A673 (cell line): ENCODE measurements at regions of chr1 and their contacts with region 1.

Region 1: DNA sequence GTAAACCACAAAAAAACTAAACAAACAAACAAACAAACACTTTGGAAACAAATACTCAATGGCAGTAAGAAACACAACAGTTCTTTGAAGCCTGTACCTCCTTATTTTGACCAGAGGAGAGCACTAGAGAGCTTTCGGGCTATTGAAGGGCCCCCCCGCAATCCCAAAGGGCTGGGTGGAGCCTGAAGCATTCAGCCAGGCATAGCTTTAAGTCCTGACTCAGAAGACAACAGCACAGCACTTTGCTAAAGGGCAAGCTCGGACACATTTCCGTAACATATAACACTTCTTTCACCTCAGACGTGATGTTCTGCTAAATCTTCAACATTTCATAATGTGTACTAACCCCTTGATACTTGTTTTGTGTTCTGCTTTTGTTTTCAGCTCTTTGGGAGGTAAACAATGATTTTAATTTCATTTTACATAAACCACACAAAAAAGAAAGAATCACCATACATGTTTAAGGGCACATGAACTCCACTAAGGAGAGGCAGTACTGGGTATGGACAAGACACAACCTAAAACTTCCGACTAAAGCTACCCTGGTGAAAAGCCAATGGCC is 9.7 kb upstream of the SHCBP1L start:
- DNase-seq: peak; percentile 92
- H3K4me3 ChIP-seq: peak overlapping the region; percentile 28
- H3K27ac ChIP-seq: no peak overlapping the region
- H3K4me1 ChIP-seq: peaks cover 6% of the 10 kb centered on the region
- H3K27me3 ChIP-seq: no peaks in the 10 kb centered on the region
- CTCF ChIP-seq: peak; percentile 96

Region 2: DNA sequence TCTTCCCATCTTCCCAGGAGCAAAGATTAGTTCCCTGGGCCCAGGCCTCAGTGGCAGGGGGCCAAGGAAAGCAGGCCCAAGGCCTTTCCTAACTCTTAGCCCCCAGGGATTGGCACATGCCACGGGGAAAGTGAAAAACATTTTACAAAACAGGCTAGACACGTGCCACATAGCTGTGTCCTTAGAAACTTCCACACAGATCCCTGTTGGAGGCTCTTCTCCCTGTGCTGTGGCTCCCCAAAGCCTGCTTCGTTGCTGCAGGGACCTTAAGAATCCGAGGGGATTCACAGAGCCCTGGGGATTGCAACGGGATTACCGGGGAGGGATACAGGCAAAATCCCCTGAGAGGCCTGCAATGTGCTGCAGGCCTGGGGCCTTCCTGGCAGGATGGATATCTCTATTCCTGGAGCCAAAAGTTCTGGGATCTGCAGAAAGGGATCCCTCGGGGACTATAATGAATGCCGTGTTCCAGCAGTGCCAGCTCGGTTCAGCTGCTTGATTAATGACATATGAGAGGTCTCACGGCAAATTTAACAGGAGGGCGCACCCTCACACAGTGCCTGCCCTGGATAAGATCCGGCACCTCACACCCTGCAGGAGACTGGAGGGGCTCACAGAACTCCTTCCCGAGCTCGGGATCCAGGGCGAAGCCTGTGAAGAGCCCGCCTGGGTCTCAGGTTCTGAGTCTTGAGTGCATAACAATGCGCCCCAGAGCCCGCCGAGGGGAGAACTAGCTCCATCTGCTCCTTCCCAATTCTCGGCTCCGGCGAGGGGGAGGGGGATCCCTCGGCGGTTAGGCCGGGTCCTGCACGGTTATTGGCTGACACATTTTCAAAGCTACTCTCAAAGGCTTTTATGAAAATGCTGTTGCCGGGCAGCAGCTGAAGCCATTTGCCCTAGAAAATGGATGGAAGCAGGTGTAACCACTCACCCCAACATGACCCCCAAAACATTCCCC is 263.0 kb before region 1 on chr1:
- CTCF ChIA-PET with region 1: no interaction called
- POLR2A ChIA-PET with region 1: no interaction called
- intact Hi-C with region 1: no loop called
- DNase-seq: peak; percentile 43
- H3K4me3 ChIP-seq: no peak overlapping the region
- H3K27ac ChIP-seq: no peak overlapping the region
- H3K4me1 ChIP-seq: peaks cover 10% of the 10 kb centered on the region
- H3K27me3 ChIP-seq: no peaks in the 10 kb centered on the region
- CTCF ChIP-seq: no peak

Region 3: GRCh38 chr1:182839209-182840065 is 123.2 kb before region 1 on chr1 and contains the start of gene DHX9:
- CTCF ChIA-PET with region 1: no interaction called
- POLR2A ChIA-PET with region 1: no interaction called
- intact Hi-C with region 1: no loop called
- DNase-seq: peak; percentile 96
- H3K4me3 ChIP-seq: peak within 1 kb of the TSS; percentile 79
- H3K27ac ChIP-seq: peak within 1 kb of the TSS; percentile 98
- H3K4me1 ChIP-seq: peaks cover 17% of the 10 kb centered on the region
- H3K27me3 ChIP-seq: no peaks in the 10 kb centered on the region
- CTCF ChIP-seq: peak; percentile 32
- total RNA-seq, gene DHX9: 374 and 384 TPM in 2 replicates

Region 4: GRCh38 chr1:183070923-183071618 is 108.4 kb after region 1 on chr1:
- CTCF ChIA-PET with region 1: interaction called, 3 read pairs
- POLR2A ChIA-PET with region 1: no interaction called
- intact Hi-C with region 1: loop called (anchors 5 kb)
- DNase-seq: peak; percentile 97
- H3K4me3 ChIP-seq: no peak overlapping the region
- H3K27ac ChIP-seq: peak overlapping the region; percentile 71
- H3K4me1 ChIP-seq: peaks cover 57% of the 10 kb centered on the region
- H3K27me3 ChIP-seq: no peaks in the 10 kb centered on the region
- CTCF ChIP-seq: no peak

Region 5: DNA sequence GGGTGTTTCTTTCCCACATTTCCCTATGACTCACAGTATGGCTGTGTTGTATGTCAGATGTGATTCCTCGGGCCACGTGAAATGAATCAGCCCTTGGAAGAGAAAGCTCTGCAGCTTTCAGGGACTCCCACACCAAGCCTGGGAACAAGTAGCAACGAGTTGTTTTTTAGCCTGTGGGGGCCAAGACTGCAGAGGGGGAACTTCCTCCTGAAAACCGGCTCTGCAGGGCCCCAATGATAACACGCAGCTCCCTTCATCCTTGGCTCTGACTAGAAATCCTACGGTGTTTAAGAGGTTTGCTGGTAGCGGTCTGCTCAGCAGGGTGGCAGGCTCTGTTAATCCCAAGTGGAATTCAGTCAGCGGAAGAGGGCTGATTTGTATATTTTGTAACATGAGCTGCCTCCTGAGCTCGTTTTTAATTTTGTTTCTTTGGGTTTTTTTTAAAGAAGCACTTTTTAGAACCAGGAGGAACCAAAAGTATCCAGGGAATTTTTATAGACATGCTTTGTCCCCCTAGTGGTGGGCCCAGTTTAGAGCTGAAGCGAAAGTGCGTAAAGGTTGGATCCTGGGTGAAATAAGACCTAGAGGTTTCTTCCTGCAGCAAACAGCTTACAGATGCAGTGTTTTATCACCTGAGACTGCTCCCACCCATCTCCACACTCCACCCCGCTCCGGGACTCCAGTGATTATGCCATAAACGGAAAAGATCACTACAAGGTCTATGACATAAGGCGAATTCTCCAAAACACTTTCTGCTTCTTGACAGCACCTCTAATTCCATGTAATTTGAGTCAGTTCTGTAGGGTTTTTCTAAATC is 272.2 kb after region 1 on chr1:
- CTCF ChIA-PET with region 1: interaction called, 25 read pairs
- POLR2A ChIA-PET with region 1: no interaction called
- intact Hi-C with region 1: loop called (anchors 1 kb)
- DNase-seq: peak; percentile 95
- H3K4me3 ChIP-seq: peak overlapping the region; percentile 34
- H3K27ac ChIP-seq: peak overlapping the region; percentile 66
- H3K4me1 ChIP-seq: peaks cover 19% of the 10 kb centered on the region
- H3K27me3 ChIP-seq: no peaks in the 10 kb centered on the region
- CTCF ChIP-seq: peak; percentile 88

Region 6: GRCh38 chr1:183471743-183472487 is 509.3 kb after region 1 on chr1:
- CTCF ChIA-PET with region 1: interaction called, 12 read pairs
- POLR2A ChIA-PET with region 1: no interaction called
- intact Hi-C with region 1: loop called (anchors 10 kb)
- DNase-seq: peak; percentile 100
- H3K4me3 ChIP-seq: peak overlapping the region; percentile 98
- H3K27ac ChIP-seq: peak overlapping the region; percentile 99
- H3K4me1 ChIP-seq: peaks cover 14% of the 10 kb centered on the region
- H3K27me3 ChIP-seq: no peaks in the 10 kb centered on the region
- CTCF ChIP-seq: no peak

Region 7: GRCh38 chr1:183628537-183628936 is 665.9 kb after region 1 on chr1:
- CTCF ChIA-PET with region 1: no interaction called
- POLR2A ChIA-PET with region 1: no interaction called
- intact Hi-C with region 1: loop called (anchors 5 kb)
- DNase-seq: no peak
- H3K4me3 ChIP-seq: no peak overlapping the region
- H3K27ac ChIP-seq: peak overlapping the region; percentile 22
- H3K4me1 ChIP-seq: peaks cover 20% of the 10 kb centered on the region
- H3K27me3 ChIP-seq: no peaks in the 10 kb centered on the region
- CTCF ChIP-seq: no peak